Activated CD4-positive, alpha-beta T cell treated with anti-CD3 and anti-CD28 coated beads for 36 hours (primary cell): ENCODE measurements at regions of chr2 and their contacts with region 1.

Region 1: GRCh38 chr2:7758073-7758759 is 841.0 kb downstream of the RNF144A start:
- DNase-seq: no peak
- ATAC-seq: peak; percentile 82
- H3K4me3 Mint-ChIP-seq: no peak overlapping the region
- H3K27ac Mint-ChIP-seq: peak overlapping the region; percentile 62
- H3K4me1 Mint-ChIP-seq: peaks cover 16% of the 10 kb centered on the region
- H3K27me3 Mint-ChIP-seq: peaks cover 14% of the 10 kb centered on the region

Region 2: GRCh38 chr2:6835467-6835866 is 922.7 kb before region 1 on chr2:
- CTCF ChIA-PET with region 1: no interaction called
- POLR2A ChIA-PET with region 1: no interaction called
- intact Hi-C with region 1: no loop called
- DNase-seq: no peak
- ATAC-seq: peak; percentile 92
- H3K4me3 Mint-ChIP-seq: no peak overlapping the region
- H3K27ac Mint-ChIP-seq: no peak overlapping the region
- H3K4me1 Mint-ChIP-seq: peaks cover 18% of the 10 kb centered on the region
- H3K27me3 Mint-ChIP-seq: no peaks in the 10 kb centered on the region

Region 3: GRCh38 chr2:7523481-7524120 is 234.6 kb before region 1 on chr2:
- CTCF ChIA-PET with region 1: no interaction called
- POLR2A ChIA-PET with region 1: no interaction called
- intact Hi-C with region 1: loop called in 1 of 2 experiments (anchors 5 kb)
- DNase-seq: peak; percentile 27
- ATAC-seq: peak; percentile 51
- H3K4me3 Mint-ChIP-seq: peak overlapping the region; percentile 46
- H3K27ac Mint-ChIP-seq: peak overlapping the region; percentile 92
- H3K4me1 Mint-ChIP-seq: peaks cover 57% of the 10 kb centered on the region
- H3K27me3 Mint-ChIP-seq: no peaks in the 10 kb centered on the region

Region 4: GRCh38 chr2:7588295-7588694 is 169.9 kb before region 1 on chr2:
- CTCF ChIA-PET with region 1: interaction called, 3 read pairs
- POLR2A ChIA-PET with region 1: no interaction called
- intact Hi-C with region 1: loop called in 1 of 2 experiments (anchors 5 kb)
- DNase-seq: no peak
- ATAC-seq: peak; percentile 71
- H3K4me3 Mint-ChIP-seq: no peak overlapping the region
- H3K27ac Mint-ChIP-seq: peak overlapping the region; percentile 71
- H3K4me1 Mint-ChIP-seq: peaks cover 41% of the 10 kb centered on the region
- H3K27me3 Mint-ChIP-seq: no peaks in the 10 kb centered on the region

Region 5: GRCh38 chr2:7845332-7845731 is 87.1 kb after region 1 on chr2:
- CTCF ChIA-PET with region 1: no interaction called
- POLR2A ChIA-PET with region 1: no interaction called
- intact Hi-C with region 1: loop called in 1 of 2 experiments (anchors 1 kb)
- DNase-seq: no peak
- ATAC-seq: no peak
- H3K4me3 Mint-ChIP-seq: no peak overlapping the region
- H3K27ac Mint-ChIP-seq: no peak overlapping the region
- H3K4me1 Mint-ChIP-seq: peaks cover 40% of the 10 kb centered on the region
- H3K27me3 Mint-ChIP-seq: peaks cover 6% of the 10 kb centered on the region

Region 6: DNA sequence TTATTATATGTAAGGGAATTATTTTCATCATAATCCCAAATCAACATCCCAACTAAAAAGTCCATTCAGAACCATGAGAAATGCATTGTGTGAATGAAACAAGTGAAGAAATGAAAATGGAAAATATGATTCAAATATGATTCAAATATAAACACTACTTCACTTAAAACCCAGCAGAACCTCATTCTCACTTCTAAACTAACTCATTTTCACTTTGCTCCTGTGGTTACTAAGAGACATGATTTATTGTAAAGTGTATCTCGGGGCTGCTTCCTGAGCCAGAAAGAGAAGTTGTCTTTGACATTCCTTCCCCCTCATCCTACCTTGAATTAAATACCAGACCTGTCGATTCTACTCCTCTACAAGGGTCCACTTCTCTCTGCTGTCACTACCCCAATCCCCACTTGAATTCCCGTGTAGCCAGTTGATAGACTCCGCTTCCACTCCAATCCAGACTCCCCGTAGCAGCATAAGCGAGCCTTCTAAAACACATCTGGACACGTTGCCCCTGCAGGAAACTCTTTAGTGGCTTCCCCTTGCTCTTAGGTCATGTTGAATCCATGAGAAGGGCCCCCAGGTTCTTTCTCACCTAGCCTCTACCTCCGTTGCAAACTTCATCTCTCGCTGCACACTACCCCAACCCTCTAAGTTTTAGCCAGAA is 226.6 kb after region 1 on chr2:
- CTCF ChIA-PET with region 1: no interaction called
- POLR2A ChIA-PET with region 1: no interaction called
- intact Hi-C with region 1: loop called in 1 of 2 experiments (anchors 5 kb)
- DNase-seq: no peak
- ATAC-seq: peak; percentile 96
- H3K4me3 Mint-ChIP-seq: peak overlapping the region; percentile 44
- H3K27ac Mint-ChIP-seq: peak overlapping the region; percentile 95
- H3K4me1 Mint-ChIP-seq: peaks cover 33% of the 10 kb centered on the region
- H3K27me3 Mint-ChIP-seq: no peaks in the 10 kb centered on the region